CD8-positive, alpha-beta T cell (primary cell): ENCODE measurements at regions of chr11 and their contacts with region 1.

Region 1: DNA sequence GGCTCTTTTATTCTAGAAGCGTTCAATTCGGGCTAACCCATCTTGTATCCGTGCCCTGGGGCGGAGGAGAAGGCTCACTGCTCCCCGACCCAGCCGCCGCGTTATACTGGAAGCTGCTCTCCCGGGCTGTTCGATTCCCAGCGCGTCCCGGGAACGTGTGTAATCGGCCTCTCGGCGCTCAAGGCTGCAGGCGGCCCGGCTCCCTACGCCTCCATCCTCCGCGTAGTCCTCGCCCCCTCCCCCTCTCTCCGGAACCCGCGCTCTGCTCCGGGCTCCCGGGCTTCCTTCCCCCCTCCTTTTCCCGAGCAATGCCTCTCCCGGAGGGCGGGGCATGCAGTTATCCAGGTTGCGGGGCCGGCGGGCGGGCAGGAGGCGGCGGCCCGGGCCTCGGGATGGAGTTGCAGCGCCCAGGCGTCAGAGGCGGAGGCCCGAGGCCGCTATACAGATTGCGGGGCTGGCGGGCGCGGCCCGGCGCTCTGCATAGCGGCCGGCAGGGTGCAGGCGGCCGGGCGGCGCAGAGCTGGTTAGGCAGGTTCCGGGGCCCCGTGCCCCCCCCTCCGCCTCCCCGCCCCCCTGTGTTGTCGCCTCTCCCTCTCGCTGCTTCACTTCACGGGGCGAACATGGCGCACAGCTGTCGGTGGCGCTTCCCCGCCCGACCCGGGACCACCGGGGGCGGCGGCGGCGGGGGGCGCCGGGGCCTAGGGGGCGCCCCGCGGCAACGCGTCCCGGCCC is at the start of gene KMT2A:
- DNase-seq: peak; percentile 91 to 99 (median 94)
- ATAC-seq: peak; percentile 62
- H3K4me3 ChIP-seq: peak within 1 kb of the TSS; percentile 89 to 94
- H3K4me3 Mint-ChIP-seq: peak within 1 kb of the TSS; percentile 96
- H3K27ac ChIP-seq: peak within 1 kb of the TSS; percentile 79 to 94
- H3K27ac Mint-ChIP-seq: peak within 1 kb of the TSS; percentile 98
- H3K4me1 ChIP-seq: peaks cover 30% of the 10 kb centered on the region
- H3K4me1 Mint-ChIP-seq: peaks cover 35% of the 10 kb centered on the region
- H3K27me3 ChIP-seq: no peaks in the 10 kb centered on the region
- H3K27me3 Mint-ChIP-seq: no peaks in the 10 kb centered on the region
- CTCF ChIP-seq: no peak
- total RNA-seq, gene KMT2A: 127 to 136 TPM

Region 2: GRCh38 chr11:117501237-117501898 is 934.7 kb before region 1 on chr11:
- CTCF ChIA-PET with region 1: no interaction called
- POLR2A ChIA-PET with region 1: no interaction called
- intact Hi-C with region 1: no loop called
- DNase-seq: no peak
- ATAC-seq: no peak
- H3K4me3 ChIP-seq: no peak overlapping the region
- H3K4me3 Mint-ChIP-seq: no peak overlapping the region
- H3K27ac ChIP-seq: no peak overlapping the region
- H3K27ac Mint-ChIP-seq: no peak overlapping the region
- H3K4me1 ChIP-seq: no peaks in the 10 kb centered on the region
- H3K4me1 Mint-ChIP-seq: no peaks in the 10 kb centered on the region
- H3K27me3 ChIP-seq: no peaks in the 10 kb centered on the region
- H3K27me3 Mint-ChIP-seq: no peaks in the 10 kb centered on the region
- CTCF ChIP-seq: no peak

Region 3: GRCh38 chr11:118251858-118252652 is 184.0 kb before region 1 on chr11 and contains the start of gene MPZL3:
- CTCF ChIA-PET with region 1: no interaction called
- POLR2A ChIA-PET with region 1: interaction called, 3 read pairs
- intact Hi-C with region 1: loop called in 1 of 2 experiments (anchors 5 kb)
- DNase-seq: peak; percentile 74 to 96 (median 87)
- ATAC-seq: peak; percentile 75
- H3K4me3 ChIP-seq: peak within 1 kb of the TSS; percentile 67 to 94
- H3K4me3 Mint-ChIP-seq: peak within 1 kb of the TSS; percentile 98
- H3K27ac ChIP-seq: peak within 1 kb of the TSS; percentile 93 to 97
- H3K27ac Mint-ChIP-seq: peak within 1 kb of the TSS; percentile 100
- H3K4me1 ChIP-seq: peaks cover 8% of the 10 kb centered on the region
- H3K4me1 Mint-ChIP-seq: peaks cover 41% of the 10 kb centered on the region
- H3K27me3 ChIP-seq: no peaks in the 10 kb centered on the region
- H3K27me3 Mint-ChIP-seq: no peaks in the 10 kb centered on the region
- CTCF ChIP-seq: no peak
- total RNA-seq, gene MPZL3: 15.3 to 16.8 TPM

Region 4: DNA sequence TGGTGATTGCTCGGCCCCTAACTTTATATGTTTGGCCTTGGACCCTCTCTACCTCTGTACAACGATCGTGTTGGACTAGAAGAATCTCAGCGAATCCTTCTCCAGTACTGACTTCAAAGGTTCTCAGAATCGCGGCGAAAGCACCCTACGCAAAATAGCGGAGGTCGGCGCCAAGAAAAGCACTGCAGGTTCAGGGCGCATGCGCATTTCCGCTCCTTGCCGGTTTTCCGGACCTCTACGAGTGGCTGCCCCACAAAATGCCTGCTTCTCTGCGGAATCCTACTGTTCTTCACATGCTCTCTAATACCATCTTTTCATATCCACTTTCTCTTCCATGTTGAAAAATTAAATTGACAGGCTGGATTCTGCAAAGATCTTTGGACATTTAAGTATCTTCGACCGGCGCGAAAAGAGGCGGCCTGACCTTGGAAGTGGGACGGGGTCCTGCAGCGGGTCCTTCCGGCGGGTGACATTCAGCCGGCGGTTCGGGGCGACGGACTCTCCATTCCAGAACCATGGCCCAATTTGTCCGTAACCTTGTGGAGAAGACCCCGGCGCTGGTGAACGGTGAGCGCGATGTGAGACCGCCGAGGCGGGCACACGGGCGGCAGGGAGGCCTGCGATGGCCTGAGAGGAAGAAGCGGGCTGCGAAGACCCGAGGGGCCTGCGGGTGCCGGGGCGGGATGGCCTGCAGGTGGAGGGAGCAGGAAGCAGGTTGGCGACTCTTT is 34.7 kb before region 1 on chr11 and contains the start of gene ATP5MG:
- CTCF ChIA-PET with region 1: interaction called, 11 read pairs
- POLR2A ChIA-PET with region 1: interaction called, 38 read pairs
- intact Hi-C with region 1: loop called (anchors 1 kb)
- DNase-seq: peak; percentile 88 to 97 (median 93)
- ATAC-seq: peak; percentile 64
- H3K4me3 ChIP-seq: peak within 1 kb of the TSS; percentile 59 to 87
- H3K4me3 Mint-ChIP-seq: peak within 1 kb of the TSS; percentile 93
- H3K27ac ChIP-seq: peak within 1 kb of the TSS; percentile 77 to 96
- H3K27ac Mint-ChIP-seq: peak within 1 kb of the TSS; percentile 100
- H3K4me1 ChIP-seq: peaks cover 47% of the 10 kb centered on the region
- H3K4me1 Mint-ChIP-seq: peaks cover 70% of the 10 kb centered on the region
- H3K27me3 ChIP-seq: no peaks in the 10 kb centered on the region
- H3K27me3 Mint-ChIP-seq: no peaks in the 10 kb centered on the region
- CTCF ChIP-seq: no peak
- total RNA-seq, gene ATP5MG: 148 to 160 TPM

Region 5: DNA sequence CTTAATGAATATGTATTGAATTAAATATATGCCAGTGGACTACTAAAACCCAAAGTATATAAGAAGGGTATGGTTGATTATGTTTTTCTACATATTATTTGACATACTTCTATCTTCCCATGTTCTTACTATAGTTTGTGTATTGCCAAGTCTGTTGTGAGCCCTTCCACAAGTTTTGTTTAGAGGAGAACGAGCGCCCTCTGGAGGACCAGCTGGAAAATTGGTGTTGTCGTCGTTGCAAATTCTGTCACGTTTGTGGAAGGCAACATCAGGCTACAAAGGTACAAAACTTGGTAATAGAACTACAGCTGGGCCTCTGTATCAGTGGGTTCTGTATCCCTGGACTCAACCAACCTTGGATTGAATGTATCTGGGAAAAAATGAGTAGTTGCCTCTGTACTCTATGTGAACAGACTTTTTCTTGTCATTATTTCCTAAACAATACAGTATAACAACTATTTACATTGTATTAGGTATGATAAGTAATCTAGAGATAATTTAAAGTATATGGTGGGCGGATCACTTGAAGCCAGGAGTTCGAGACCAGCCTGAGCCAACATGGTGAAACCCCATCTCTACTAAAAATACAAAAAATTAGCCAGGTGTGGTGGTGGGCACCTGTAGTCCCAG is 52.5 kb after region 1 on chr11:
- CTCF ChIA-PET with region 1: interaction called, 4 read pairs
- POLR2A ChIA-PET with region 1: interaction called, 5 read pairs
- intact Hi-C with region 1: loop called (anchors 2 kb)
- DNase-seq: peak; percentile 66 to 88 (median 81)
- ATAC-seq: peak; percentile 77
- H3K4me3 ChIP-seq: no peak overlapping the region
- H3K4me3 Mint-ChIP-seq: no peak overlapping the region
- H3K27ac ChIP-seq: no peak overlapping the region
- H3K27ac Mint-ChIP-seq: no peak overlapping the region
- H3K4me1 ChIP-seq: no peaks in the 10 kb centered on the region
- H3K4me1 Mint-ChIP-seq: peaks cover 4% of the 10 kb centered on the region
- H3K27me3 ChIP-seq: no peaks in the 10 kb centered on the region
- H3K27me3 Mint-ChIP-seq: no peaks in the 10 kb centered on the region
- CTCF ChIP-seq: peak; percentile 93

Region 6: GRCh38 chr11:118572061-118572980 is 136.3 kb after region 1 on chr11 and contains the start of gene ARCN1:
- CTCF ChIA-PET with region 1: no interaction called
- POLR2A ChIA-PET with region 1: no interaction called
- intact Hi-C with region 1: loop called in 1 of 2 experiments (anchors 5 kb)
- DNase-seq: peak; percentile 61 to 91 (median 77)
- ATAC-seq: peak; percentile 91
- H3K4me3 ChIP-seq: peak within 1 kb of the TSS; percentile 99 to 100
- H3K4me3 Mint-ChIP-seq: peak within 1 kb of the TSS; percentile 94
- H3K27ac ChIP-seq: peak within 1 kb of the TSS; percentile 96 to 99
- H3K27ac Mint-ChIP-seq: peak within 1 kb of the TSS; percentile 97
- H3K4me1 ChIP-seq: peaks cover 34% of the 10 kb centered on the region
- H3K4me1 Mint-ChIP-seq: peaks cover 49% of the 10 kb centered on the region
- H3K27me3 ChIP-seq: no peaks in the 10 kb centered on the region
- H3K27me3 Mint-ChIP-seq: no peaks in the 10 kb centered on the region
- CTCF ChIP-seq: no peak
- total RNA-seq, gene ARCN1: 77.8 to 81.2 TPM